CD14-positive monocyte (primary cell): ENCODE measurements at regions of chr15 and their contacts with region 1.

Region 1: GRCh38 chr15:99507504-99508310 is 58.1 kb upstream of the MEF2A start:
- DNase-seq: no peak
- H3K4me3 ChIP-seq: peak overlapping the region in 1 of 3 experiments; percentile 33
- H3K4me3 Mint-ChIP-seq: peak overlapping the region; percentile 61 to 81
- H3K27ac ChIP-seq: peak overlapping the region in 1 of 2 donors; percentile 38
- H3K27ac Mint-ChIP-seq: peak overlapping the region; percentile 57 to 97 (median 74)
- H3K4me1 ChIP-seq: peaks cover 87 to 97% of the 10 kb centered on the region in 2 donors
- H3K4me1 Mint-ChIP-seq: peaks cover 95% of the 10 kb centered on the region
- H3K27me3 ChIP-seq: no peaks in the 10 kb centered on the region
- H3K27me3 Mint-ChIP-seq: peaks cover 0 to 6% (median 0%) of the 10 kb centered on the region in 3 donors
- CTCF ChIP-seq: no peak

Region 2: DNA sequence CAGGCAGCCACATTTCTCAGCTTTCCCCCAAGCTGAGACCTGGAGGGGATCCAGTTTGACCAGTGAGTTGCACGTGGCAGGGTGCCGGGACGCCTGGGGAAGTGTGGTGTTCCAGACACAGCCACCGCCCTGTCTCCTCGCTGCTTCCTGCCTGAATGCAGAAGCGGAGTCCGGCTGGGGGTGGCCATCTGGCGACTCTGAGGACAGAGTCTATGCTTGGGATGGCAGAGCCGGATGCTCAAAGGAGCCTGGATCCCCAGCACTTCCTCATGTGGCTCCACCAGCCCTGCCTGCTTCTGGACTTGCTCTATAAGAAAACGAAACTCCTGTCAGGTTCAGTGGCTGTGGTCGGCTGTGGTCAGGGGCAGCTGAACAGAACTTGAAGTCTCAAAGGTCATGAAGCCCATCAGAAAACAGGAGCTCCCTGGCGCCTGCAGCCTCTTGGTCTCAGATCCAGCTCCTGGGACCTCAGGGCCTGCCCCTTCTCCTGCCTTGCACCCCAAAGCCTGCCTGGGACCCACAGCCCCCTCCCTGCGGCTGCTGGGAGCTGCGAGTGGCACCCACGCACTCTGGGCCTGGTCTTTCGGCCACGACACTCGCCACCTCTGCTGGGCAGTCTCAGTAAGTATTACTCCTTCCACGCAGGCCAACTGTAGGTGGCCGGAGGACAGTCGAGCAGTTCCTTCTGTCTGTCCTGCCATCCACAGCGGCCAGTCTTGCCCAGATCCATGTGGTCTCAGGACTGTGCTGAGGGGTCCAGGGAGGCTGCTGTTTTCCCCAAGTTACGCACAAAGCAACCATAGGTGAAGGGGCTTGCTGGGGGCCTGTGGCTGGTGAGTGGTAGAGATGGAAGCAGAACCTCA is 54.7 kb before region 1 on chr15:
- intact Hi-C with region 1: loop called in 1 of 2 experiments (anchors 10 kb)
- DNase-seq: peak; percentile 90 to 97 (median 93)
- H3K4me3 ChIP-seq: peak overlapping the region in 1 of 3 experiments; percentile 51
- H3K4me3 Mint-ChIP-seq: peak overlapping the region; percentile 37 to 73
- H3K27ac ChIP-seq: peak overlapping the region; percentile 82 to 90
- H3K27ac Mint-ChIP-seq: peak overlapping the region; percentile 81 to 92 (median 90)
- H3K4me1 ChIP-seq: peaks cover 57 to 58% of the 10 kb centered on the region in 2 donors
- H3K4me1 Mint-ChIP-seq: peaks cover 59% of the 10 kb centered on the region
- H3K27me3 ChIP-seq: no peaks in the 10 kb centered on the region
- H3K27me3 Mint-ChIP-seq: peaks cover 2 to 7% (median 3%) of the 10 kb centered on the region in 3 donors
- CTCF ChIP-seq: no peak

Region 3: GRCh38 chr15:99476413-99477222 is 31.1 kb before region 1 on chr15:
- intact Hi-C with region 1: loop called (anchors 5 kb)
- DNase-seq: peak; percentile 79 to 94 (median 85)
- H3K4me3 ChIP-seq: peak overlapping the region in 1 of 3 experiments; percentile 44
- H3K4me3 Mint-ChIP-seq: peak overlapping the region; percentile 59 to 69
- H3K27ac ChIP-seq: peak overlapping the region; percentile 61 to 91
- H3K27ac Mint-ChIP-seq: peak overlapping the region; percentile 82 to 96 (median 92)
- H3K4me1 ChIP-seq: peaks cover 70 to 76% of the 10 kb centered on the region in 2 donors
- H3K4me1 Mint-ChIP-seq: peaks cover 79% of the 10 kb centered on the region
- H3K27me3 ChIP-seq: no peaks in the 10 kb centered on the region
- H3K27me3 Mint-ChIP-seq: peaks cover 0 to 4% (median 3%) of the 10 kb centered on the region in 3 donors
- CTCF ChIP-seq: no peak

Region 4: GRCh38 chr15:99613887-99614647 is 106.4 kb after region 1 on chr15:
- intact Hi-C with region 1: loop called in 1 of 2 experiments (anchors 10 kb)
- DNase-seq: peak; percentile 63 to 87 (median 72)
- H3K4me3 ChIP-seq: peak overlapping the region in 2 of 3 experiments; percentile 32 to 52
- H3K4me3 Mint-ChIP-seq: peak overlapping the region; percentile 52 to 69
- H3K27ac ChIP-seq: peak overlapping the region; percentile 71 to 90
- H3K27ac Mint-ChIP-seq: peak overlapping the region; percentile 91 to 98 (median 96)
- H3K4me1 ChIP-seq: peaks cover 38 to 41% of the 10 kb centered on the region in 2 donors
- H3K4me1 Mint-ChIP-seq: peaks cover 58% of the 10 kb centered on the region
- H3K27me3 ChIP-seq: no peaks in the 10 kb centered on the region
- H3K27me3 Mint-ChIP-seq: no peaks in the 10 kb centered on the region
- CTCF ChIP-seq: no peak